Endothelial cell of umbilical vein (primary cell): ENCODE measurements at regions of chr19 and their contacts with region 1.

Region 1: GRCh38 chr19:43519436-43520088 is 7.4 kb downstream of the ETHE1 start:
- DNase-seq: peak; percentile 78
- H3K4me3 ChIP-seq: no peak overlapping the region
- H3K27ac ChIP-seq: no peak overlapping the region
- H3K4me1 ChIP-seq: no peaks in the 10 kb centered on the region
- H3K27me3 ChIP-seq: no peaks in the 10 kb centered on the region
- CTCF ChIP-seq: peak; percentile 80 to 87
- POLR2A ChIP-seq: no peak

Region 2: DNA sequence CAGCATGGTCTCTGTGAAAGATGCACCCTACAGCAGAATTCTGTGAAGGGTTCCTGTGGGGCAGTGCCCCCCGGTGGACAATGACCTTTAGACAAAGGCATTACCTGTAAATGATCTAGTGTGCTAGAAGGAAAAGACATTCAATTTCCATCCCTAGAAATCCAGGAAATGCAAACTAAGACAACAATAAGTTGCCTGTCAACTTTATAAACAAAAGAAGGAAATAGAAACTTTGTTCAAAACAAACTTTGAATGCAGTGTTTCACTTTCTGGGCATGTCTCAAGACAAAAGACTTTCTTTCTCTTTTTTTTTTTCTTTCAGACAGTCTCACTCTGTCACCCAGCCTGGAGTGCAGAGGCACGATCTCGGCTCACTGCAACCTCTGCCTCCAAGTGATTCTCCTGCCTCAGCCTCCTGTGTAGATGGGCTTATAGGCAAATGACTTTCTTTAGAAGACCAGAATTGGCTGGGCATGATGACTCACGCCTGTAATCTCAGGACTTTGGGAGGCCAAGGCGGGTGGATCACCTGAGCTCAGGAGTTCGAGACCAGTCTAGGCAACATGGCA is 89.3 kb before region 1 on chr19:
- CTCF ChIA-PET with region 1: interaction called, 108 read pairs
- POLR2A ChIA-PET with region 1: no interaction called
- dilution Hi-C with region 1: no loop called
- intact Hi-C with region 1: loop called (anchors 1 kb)
- DNase-seq: no peak
- H3K4me3 ChIP-seq: no peak overlapping the region
- H3K27ac ChIP-seq: no peak overlapping the region
- H3K4me1 ChIP-seq: peaks cover 2% of the 10 kb centered on the region
- H3K27me3 ChIP-seq: no peaks in the 10 kb centered on the region
- CTCF ChIP-seq: no peak
- POLR2A ChIP-seq: no peak

Region 3: GRCh38 chr19:43438291-43439096 is 81.1 kb before region 1 on chr19:
- CTCF ChIA-PET with region 1: interaction called, 833 read pairs
- POLR2A ChIA-PET with region 1: interaction called, 4 read pairs
- dilution Hi-C with region 1: no loop called
- intact Hi-C with region 1: loop called (anchors 1 kb)
- DNase-seq: no peak
- H3K4me3 ChIP-seq: no peak overlapping the region
- H3K27ac ChIP-seq: no peak overlapping the region
- H3K4me1 ChIP-seq: no peaks in the 10 kb centered on the region
- H3K27me3 ChIP-seq: no peaks in the 10 kb centered on the region
- CTCF ChIP-seq: no peak
- POLR2A ChIP-seq: no peak

Region 4: GRCh38 chr19:43457809-43458208 is 61.8 kb before region 1 on chr19:
- CTCF ChIA-PET with region 1: interaction called, 30 read pairs
- POLR2A ChIA-PET with region 1: no interaction called
- dilution Hi-C with region 1: no loop called
- intact Hi-C with region 1: no loop called
- DNase-seq: no peak
- H3K4me3 ChIP-seq: no peak overlapping the region
- H3K27ac ChIP-seq: no peak overlapping the region
- H3K4me1 ChIP-seq: no peaks in the 10 kb centered on the region
- H3K27me3 ChIP-seq: no peaks in the 10 kb centered on the region
- CTCF ChIP-seq: no peak
- POLR2A ChIP-seq: no peak

Region 5: GRCh38 chr19:43463381-43464136 is 56.0 kb before region 1 on chr19:
- CTCF ChIA-PET with region 1: interaction called, 30 read pairs
- POLR2A ChIA-PET with region 1: no interaction called
- dilution Hi-C with region 1: no loop called
- intact Hi-C with region 1: no loop called
- DNase-seq: peak; percentile 91
- H3K4me3 ChIP-seq: peak overlapping the region; percentile 52 to 63 (median 58)
- H3K27ac ChIP-seq: no peak overlapping the region
- H3K4me1 ChIP-seq: peaks cover 14% of the 10 kb centered on the region
- H3K27me3 ChIP-seq: no peaks in the 10 kb centered on the region
- CTCF ChIP-seq: no peak
- POLR2A ChIP-seq: no peak

Region 6: DNA sequence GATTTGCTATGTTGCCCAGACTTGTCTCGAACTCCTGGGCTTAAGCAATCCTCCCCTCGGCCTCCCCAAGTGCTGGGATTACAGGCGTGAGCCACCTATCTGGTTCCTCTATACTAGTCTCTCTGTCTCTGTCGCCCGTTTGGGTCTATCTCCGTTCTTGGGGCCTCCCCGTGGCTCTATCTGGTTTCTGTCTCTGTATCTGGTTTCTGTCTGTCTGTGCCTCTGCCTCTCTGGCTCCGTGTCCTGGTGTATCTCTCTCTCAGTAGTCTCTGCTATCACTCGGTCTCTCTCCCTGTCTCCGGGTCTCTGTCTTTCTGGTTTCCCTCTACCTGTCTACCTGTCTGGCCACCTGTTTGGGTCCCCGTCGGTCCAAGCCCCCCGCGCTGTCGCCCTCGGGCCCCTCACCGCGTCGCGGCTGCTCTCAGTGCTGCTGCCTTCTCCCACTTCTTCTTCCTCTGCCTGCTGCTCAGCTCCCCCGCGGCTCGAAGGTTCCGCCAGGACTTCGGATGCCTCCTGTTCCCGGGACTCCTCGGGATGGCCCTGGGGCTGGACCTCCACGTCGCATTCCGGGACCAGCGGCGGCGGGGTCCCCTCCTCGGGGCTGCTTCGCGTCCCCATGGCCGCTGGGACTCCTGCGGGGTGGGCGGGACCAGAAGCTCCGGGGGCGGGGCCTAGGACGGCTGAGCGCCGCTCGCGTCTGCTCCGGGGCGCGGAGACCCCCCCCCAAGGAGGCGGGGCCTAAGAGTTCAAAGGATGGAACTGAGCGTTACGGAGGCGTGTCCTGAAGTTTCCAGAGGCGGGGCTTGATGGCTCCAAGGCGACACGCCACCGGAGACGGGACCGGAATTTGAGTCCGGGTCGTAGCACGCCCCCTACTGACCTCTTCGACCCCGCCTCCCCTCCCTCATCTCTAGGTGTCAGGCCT is 15.8 kb before region 1 on chr19:
- CTCF ChIA-PET with region 1: interaction called, 27 read pairs
- POLR2A ChIA-PET with region 1: no interaction called
- dilution Hi-C with region 1: no loop called
- intact Hi-C with region 1: no loop called
- DNase-seq: peak; percentile 95
- H3K4me3 ChIP-seq: peak overlapping the region; percentile 42 to 66 (median 49)
- H3K27ac ChIP-seq: peak overlapping the region; percentile 31
- H3K4me1 ChIP-seq: peaks cover 11% of the 10 kb centered on the region
- H3K27me3 ChIP-seq: no peaks in the 10 kb centered on the region
- CTCF ChIP-seq: peak in 1 of 2 donors; percentile 16
- POLR2A ChIP-seq: no peak

Region 7: DNA sequence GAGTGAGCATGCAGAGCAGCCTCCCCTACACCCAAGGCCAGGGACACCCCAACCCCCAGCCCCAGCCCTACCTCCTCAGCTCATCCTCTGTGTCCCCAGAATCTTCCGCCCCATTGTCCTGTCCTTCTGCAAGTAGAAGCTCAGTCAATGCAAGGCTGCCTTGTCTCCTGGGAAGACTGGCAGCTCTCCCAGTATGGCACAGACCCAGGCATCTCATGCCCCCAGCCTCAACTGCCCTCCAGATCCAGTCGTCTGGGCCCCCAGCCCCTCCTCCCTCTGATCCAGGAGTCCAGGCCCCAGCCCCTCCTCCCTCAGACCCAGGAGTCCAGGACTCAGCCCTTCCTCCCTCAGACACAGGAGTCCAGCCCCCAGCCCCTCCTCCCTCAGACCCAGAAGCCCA is 26.4 kb after region 1 on chr19:
- CTCF ChIA-PET with region 1: no interaction called
- POLR2A ChIA-PET with region 1: no interaction called
- dilution Hi-C with region 1: no loop called
- intact Hi-C with region 1: no loop called
- DNase-seq: no peak
- H3K4me3 ChIP-seq: no peak overlapping the region
- H3K27ac ChIP-seq: no peak overlapping the region
- H3K4me1 ChIP-seq: no peaks in the 10 kb centered on the region
- H3K27me3 ChIP-seq: no peaks in the 10 kb centered on the region
- CTCF ChIP-seq: no peak
- POLR2A ChIP-seq: no peak